Activated naive CD4-positive, alpha-beta T cell treated with anti-CD3 and anti-CD28 coated beads for 36 hours (primary cell): ENCODE measurements at regions of chr2 and their contacts with region 1.

Region 1: DNA sequence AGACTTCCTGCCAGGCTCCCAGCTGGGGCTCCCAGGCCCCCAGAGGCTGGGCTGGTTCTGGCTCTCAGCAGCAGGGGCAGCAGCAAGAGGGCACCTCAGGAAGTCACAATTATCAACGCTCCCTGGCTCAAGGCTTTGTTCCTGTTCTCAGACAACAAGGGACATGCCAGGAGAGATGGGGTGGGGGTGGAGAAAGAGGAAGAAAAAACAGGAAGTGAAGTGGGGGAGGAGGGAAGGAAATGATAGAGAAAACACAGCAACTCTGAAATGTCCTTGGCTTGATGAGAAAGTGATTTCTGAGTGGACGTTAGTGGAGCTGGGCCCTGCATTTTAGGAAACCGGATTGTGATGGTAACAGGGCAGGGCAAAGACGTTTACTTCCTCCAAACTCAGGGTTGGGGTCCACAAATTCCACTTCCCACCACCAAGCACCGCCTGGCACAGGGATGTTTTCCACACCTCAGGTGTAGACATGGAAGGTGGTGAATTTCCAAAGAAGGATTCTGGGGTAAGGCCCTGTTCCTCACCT is 40.4 kb downstream of the CYRIA start:
- DNase-seq: no peak
- H3K4me3 Mint-ChIP-seq: no peak overlapping the region
- H3K27ac Mint-ChIP-seq: no peak overlapping the region
- H3K4me1 Mint-ChIP-seq: peaks cover 45% of the 10 kb centered on the region
- H3K27me3 Mint-ChIP-seq: no peaks in the 10 kb centered on the region

Region 2: DNA sequence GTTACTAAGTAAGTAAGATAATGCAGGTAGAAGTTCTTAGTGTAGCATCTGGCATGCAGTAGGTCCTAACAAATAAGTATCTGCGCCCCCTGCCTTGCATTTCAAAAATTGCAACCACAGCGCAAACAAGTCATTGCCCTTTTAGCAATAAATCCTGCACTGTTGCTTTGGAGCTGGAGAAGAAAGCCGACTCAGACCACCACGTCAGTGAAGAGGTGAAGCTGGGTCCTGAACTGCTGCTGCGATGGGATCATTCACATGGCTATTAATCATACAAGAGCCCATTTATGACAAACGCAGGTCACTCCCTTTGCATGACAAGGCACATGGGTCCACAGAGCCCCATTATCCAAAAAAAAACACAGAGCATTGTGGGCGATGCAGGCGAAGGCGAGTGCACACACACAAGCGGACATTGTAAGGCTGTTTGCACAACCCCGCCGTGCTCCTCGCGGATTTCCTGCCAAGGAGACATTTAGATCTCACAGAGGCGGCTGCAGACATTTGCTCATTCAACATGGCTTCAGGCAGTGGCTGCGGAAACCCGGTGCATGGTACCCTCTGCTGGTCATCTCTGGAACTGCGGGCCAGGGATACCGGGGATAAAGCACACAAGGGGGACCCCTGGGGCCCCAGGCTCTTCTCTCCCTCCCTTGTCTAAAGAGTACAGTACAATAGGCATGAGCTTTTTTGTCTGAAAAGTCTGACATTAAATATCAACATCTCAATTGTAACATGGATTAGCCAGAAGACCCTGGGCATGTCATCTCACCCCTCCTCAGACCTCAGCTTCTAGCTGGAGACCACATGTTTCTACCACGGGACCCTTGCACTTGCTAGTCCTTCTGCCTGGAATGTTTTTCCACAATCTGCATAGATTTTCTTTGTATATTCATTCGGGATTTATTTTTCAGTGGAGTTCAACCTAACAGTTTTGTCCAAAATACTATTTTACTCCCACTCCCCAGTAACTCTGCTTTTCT is 16.3 kb before region 1 on chr2:
- CTCF ChIA-PET with region 1: interaction called, 14 read pairs
- intact Hi-C with region 1: no loop called
- DNase-seq: peak; percentile 93
- H3K4me3 Mint-ChIP-seq: peak overlapping the region; percentile 78
- H3K27ac Mint-ChIP-seq: no peak overlapping the region
- H3K4me1 Mint-ChIP-seq: no peaks in the 10 kb centered on the region
- H3K27me3 Mint-ChIP-seq: peaks cover 9% of the 10 kb centered on the region

Region 3: DNA sequence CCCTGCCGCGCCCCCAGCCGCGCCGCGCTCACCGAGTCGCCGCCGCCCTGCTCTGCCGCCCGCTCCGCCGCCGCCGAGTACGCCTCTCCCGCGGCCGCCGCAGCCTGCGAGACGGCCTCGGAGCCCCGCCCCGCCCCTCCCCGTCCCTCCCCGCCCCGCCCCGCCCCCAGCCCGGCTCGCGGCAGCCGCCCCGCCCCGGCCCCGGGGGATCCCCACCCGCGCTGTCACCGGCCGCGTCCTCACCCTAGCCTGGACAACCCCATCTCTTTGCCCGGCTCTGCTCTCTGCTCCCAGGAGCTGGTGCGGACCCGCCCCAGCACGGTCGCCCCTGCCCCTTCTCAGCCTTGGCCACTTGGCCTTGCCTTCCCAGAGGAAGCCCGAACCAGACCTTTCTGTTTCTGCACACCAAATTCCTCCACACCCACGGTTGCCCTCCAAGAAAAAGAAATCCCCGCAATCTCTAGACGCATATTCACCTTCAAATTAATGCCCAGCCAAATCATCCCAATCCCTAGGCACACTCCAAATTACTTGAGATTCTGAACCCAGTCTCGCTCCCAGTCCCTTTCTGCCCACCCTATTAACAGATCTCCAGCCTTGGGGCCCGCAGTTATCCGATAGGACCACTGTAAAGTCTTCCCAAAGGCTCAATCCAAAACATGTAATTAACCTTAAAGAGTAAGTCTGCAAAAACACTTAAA is 40.6 kb after region 1 on chr2 and contains the start of gene CYRIA:
- CTCF ChIA-PET with region 1: interaction called, 3 read pairs
- intact Hi-C with region 1: loop called (anchors 2 kb)
- DNase-seq: peak; percentile 65
- H3K4me3 Mint-ChIP-seq: peak within 1 kb of the TSS; percentile 78
- H3K27ac Mint-ChIP-seq: peak within 1 kb of the TSS; percentile 73
- H3K4me1 Mint-ChIP-seq: peaks cover 16% of the 10 kb centered on the region
- H3K27me3 Mint-ChIP-seq: peaks cover 57% of the 10 kb centered on the region
- total RNA-seq, gene CYRIA: 1.0 to 1.2 TPM

Region 4: GRCh38 chr2:16756831-16757644 is 131.8 kb after region 1 on chr2:
- CTCF ChIA-PET with region 1: interaction called, 30 read pairs
- intact Hi-C with region 1: no loop called
- DNase-seq: peak; percentile 73
- H3K4me3 Mint-ChIP-seq: no peak overlapping the region
- H3K27ac Mint-ChIP-seq: no peak overlapping the region
- H3K4me1 Mint-ChIP-seq: no peaks in the 10 kb centered on the region
- H3K27me3 Mint-ChIP-seq: peaks cover 8% of the 10 kb centered on the region

Region 5: DNA sequence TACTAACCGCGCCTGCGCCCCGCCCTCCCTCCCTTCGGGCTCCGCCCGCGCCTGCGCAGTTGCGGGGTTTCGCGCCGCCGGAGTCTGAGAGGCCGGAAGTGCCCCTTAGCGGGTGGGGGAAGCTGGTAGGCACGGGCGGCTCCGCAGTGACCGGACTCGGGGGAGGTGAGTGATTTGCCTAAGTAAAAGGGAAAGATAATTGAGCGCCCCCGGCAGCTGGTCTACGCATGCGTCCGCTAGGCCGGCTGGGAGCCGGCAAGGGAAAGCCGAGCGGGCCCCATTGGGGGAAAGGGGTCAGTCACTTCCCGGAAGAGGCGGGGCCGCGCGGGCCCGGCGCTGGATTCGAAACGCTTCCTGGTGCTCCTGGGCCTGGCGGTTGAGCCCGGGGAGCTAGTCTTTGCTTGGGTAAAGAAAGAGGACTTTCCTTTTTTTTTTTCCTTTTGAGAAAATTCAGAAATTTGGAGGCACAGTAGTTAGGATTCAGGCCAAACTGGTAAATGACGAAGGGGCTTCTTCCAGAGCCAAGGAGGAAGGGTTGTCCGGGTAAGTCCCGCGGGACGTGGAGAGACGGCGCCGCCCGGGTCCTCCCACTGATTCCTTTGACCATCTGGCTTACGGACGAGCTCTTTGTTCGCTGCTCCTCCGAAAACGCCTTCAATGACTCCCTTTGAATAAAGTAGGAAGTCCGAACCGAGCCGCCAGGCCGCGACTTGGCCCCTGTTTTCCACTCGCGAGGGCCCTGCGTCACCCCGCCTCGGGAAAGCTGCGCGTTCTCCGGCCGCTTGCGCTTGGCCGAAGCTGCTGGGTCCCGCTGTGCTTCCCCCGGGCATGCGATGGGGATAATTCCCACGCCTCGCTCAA is 1128.8 kb after region 1 on chr2 and contains the starts of genes GEN1 and SMC6:
- CTCF ChIA-PET with region 1: no interaction called
- intact Hi-C with region 1: loop called (anchors 5 kb)
- DNase-seq: peak; percentile 90
- H3K4me3 Mint-ChIP-seq: peak within 1 kb of the TSS; percentile 85
- H3K27ac Mint-ChIP-seq: peak within 1 kb of the TSS; percentile 96
- H3K4me1 Mint-ChIP-seq: peaks cover 31% of the 10 kb centered on the region
- H3K27me3 Mint-ChIP-seq: no peaks in the 10 kb centered on the region
- total RNA-seq, gene GEN1: 13.4 to 15.5 TPM
- total RNA-seq, gene SMC6: 21.6 to 22.8 TPM